Calu3 (cell line): ENCODE measurements at regions of chr5 and their contacts with region 1.

Region 1: DNA sequence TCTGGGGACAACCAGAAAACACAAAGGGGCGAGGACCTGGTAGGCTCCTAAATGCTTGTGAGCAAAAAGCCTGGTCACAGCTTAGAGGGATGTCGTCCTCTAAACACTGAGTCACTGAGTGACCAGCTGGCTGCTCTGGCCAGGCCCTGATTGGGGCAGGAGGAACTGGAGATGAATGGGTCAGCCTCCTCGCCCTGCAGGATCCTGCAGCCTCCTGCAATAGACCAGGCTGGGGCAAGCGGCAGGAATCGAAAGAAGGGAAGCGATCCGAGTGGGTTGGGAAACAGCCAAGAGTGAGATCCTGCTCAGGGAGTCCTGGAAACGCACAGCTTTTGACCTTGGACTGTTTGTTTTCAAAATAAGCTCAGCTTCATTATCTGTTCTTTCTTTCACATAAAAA is 34.1 kb upstream of the MSX2 start:
- DNase-seq: peak; percentile 22
- H3K4me3 Mint-ChIP-seq: no peak overlapping the region
- H3K27ac Mint-ChIP-seq: no peak overlapping the region
- H3K4me1 Mint-ChIP-seq: peaks cover 42% of the 10 kb centered on the region
- H3K27me3 Mint-ChIP-seq: peaks cover 40% of the 10 kb centered on the region
- CTCF ChIP-seq: no peak

Region 2: GRCh38 chr5:174545926-174546325 is 144.3 kb before region 1 on chr5:
- CTCF ChIA-PET with region 1: no interaction called
- intact Hi-C with region 1: no loop called
- DNase-seq: no peak
- H3K4me3 Mint-ChIP-seq: no peak overlapping the region
- H3K27ac Mint-ChIP-seq: no peak overlapping the region
- H3K4me1 Mint-ChIP-seq: peaks cover 7% of the 10 kb centered on the region
- H3K27me3 Mint-ChIP-seq: no peaks in the 10 kb centered on the region
- CTCF ChIP-seq: no peak

Region 3: GRCh38 chr5:174599992-174600391 is 90.3 kb before region 1 on chr5:
- CTCF ChIA-PET with region 1: no interaction called
- intact Hi-C with region 1: loop called (anchors 5 kb)
- DNase-seq: peak; percentile 55
- H3K4me3 Mint-ChIP-seq: peak overlapping the region; percentile 61
- H3K27ac Mint-ChIP-seq: peak overlapping the region; percentile 91
- H3K4me1 Mint-ChIP-seq: peaks cover 43% of the 10 kb centered on the region
- H3K27me3 Mint-ChIP-seq: no peaks in the 10 kb centered on the region
- CTCF ChIP-seq: no peak

Region 4: DNA sequence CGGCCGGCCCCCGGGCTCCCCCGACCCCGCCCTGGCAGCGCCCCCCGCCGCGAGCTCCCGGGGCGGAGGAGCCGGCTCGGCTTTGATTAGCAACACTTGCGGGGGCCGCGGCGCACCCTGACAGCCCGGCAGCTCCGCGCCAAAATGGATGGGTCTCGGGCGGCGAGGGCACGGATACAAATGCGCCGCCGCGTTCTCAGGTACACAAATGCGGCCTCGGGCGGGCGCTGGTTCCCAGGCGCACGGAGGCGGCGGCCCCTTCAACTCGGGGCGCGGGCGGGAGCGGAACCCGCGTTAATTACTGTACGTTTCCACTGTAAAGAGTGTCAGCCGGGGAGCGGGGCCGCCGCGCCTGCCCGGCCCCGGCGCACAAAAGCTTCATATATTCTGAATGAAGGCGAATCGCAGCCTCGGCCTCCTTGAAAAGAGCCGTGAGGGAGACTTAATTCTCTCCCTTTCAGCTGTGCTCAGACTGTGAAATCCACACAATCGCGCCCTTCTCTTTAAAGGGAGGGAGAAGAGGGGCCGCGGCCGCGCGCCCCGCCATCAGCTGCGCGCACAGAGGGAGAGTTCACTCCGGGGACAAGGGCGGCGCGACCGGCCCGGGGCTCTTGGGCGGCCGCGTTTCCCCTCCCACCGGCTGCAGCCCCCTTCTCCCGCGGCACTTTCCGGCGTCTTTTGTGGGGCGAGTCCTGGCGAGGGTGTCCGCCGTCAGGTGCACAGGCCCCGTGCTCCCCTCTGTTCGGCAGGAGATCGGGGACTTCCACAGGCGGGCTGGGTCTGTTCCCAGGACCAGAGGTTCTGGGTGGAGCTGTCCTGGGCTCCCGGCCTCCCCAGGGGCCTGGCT is 61.1 kb after region 1 on chr5:
- CTCF ChIA-PET with region 1: no interaction called
- intact Hi-C with region 1: no loop called
- DNase-seq: peak; percentile 36
- H3K4me3 Mint-ChIP-seq: peak overlapping the region; percentile 70
- H3K27ac Mint-ChIP-seq: no peak overlapping the region
- H3K4me1 Mint-ChIP-seq: no peaks in the 10 kb centered on the region
- H3K27me3 Mint-ChIP-seq: peaks cover 83% of the 10 kb centered on the region
- CTCF ChIP-seq: no peak